Psoas muscle (tissue), 8 donors: ENCODE measurements at regions of chr10 and their contacts with region 1.

Region 1: DNA sequence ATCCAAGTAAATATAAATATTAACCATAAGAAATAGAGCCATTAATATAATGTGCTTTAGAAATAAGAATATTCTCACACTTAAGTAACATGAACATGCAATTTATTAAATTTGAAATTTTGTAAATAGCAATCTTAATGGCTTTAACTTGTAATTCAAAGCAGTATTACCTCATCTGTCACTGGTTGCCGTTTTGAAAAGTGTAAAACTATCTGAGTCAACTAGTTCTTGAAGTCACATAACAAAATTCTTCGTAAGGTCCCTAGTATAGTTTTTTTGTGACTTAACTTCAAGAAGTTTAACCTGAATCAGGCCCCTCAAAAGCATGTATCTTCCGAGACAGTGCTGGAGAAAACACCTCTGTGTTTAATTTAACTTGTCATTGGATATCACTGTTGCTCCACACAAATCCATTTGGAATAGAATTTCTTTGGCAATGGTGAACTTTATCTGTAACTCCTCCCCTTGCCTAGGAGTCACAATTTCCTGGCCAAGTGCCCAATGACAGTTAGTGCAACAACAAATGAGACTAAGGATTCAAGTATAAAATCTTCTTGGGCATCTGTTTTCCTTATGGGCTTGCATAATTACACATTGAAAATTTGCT is 47.1 kb downstream of the NT5C2 start:
- DNase-seq: peak; percentile 58 to 71
- ATAC-seq: peak; percentile 72 to 80 (median 76)
- H3K4me3 ChIP-seq: peak overlapping the region; percentile 61
- H3K27ac ChIP-seq: peak overlapping the region; percentile 86
- H3K4me1 ChIP-seq: peaks cover 76% of the 10 kb centered on the region
- H3K27me3 ChIP-seq: no peaks in the 10 kb centered on the region
- CTCF ChIP-seq: no peak

Region 2: DNA sequence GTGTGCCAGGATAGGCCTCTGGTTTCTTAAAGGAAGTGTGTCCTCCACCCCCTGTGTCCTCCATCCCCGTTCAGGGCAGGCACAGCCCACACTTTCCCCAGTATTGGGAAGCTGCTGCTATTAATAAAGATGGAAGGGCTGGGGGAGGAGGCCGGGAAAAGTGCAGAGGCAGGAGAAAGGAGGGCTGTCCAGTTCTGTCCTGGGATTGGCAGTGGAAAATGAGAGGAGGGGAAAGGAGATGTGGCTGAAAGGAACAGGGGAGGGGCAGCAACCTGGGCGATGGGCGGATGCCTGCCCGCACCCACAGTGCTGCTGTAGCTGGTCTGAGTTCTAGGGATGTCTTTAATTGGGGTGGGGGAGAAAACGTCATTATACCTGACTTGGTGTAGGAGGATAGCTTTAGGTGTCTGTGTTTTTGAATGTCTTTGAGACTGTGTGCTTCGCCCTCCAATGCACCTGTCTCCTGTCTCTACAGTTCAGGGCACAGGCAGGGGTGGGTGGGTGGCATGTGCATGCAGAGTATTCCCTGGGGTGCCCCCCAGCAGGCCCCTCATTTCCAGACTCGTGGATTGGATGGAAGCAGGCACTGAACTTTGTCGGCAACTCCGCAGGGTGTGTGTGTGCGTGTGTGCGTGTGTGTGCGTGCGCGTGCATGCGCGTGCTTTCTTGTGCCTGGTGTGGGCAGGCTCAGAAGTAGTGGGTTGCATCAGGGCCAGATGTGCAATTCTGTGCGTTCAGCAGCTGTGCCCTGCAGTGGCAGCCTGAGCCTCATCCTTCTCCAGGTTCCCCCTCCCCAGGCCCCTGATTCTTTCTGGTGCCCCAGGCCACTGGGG is 499.1 kb before region 1 on chr10:
- intact Hi-C with region 1: no loop called
- DNase-seq: peak; percentile 60 to 75
- ATAC-seq: no peak
- H3K4me3 ChIP-seq: peak overlapping the region; percentile 94
- H3K27ac ChIP-seq: peak overlapping the region; percentile 99
- H3K4me1 ChIP-seq: peaks cover 54% of the 10 kb centered on the region
- H3K27me3 ChIP-seq: no peaks in the 10 kb centered on the region
- CTCF ChIP-seq: no peak

Region 3: DNA sequence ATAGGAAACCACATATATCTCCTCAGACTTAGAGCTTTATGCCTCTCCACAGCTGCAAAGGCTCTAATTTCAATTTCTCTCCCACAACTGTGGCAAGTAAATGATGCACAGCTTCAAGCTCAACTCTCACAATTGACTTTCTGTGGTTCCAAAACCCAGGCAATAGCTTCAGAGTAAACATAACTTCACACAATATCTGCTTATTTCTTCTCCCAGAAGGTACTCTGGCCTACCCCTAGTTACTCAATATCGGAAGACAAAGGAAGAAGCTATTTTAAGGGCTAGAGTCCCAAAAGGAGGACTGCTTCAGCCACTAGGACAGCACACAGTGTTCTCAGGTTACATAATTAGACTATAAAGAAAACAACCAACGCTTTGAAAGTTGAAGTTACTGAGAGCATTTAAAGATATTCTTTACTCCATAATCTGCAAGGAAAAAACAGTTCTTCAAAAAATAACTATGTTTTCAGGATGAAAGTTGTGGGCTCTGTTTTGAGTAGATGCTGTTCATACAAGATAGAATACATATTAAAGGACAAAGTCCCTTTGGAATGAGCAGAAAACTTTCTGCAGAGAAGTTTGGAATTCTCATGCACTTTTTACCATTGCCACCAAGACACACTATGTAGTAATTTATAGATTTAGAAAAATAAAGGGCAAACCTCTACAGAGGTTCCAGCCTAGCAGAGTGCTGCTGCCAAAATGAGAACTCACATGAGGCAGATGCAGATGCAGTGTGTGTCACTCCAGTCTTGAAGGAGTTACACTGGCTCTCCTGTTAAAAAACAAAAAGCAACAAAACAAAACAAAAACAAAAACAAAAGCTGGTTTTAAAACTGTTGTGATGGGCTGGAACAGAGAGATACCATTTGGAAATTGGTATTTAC is 34.7 kb before region 1 on chr10:
- intact Hi-C with region 1: loop called (anchors 5 kb)
- DNase-seq: no peak
- ATAC-seq: peak; percentile 65 to 85 (median 75)
- H3K4me3 ChIP-seq: peak overlapping the region; percentile 26
- H3K27ac ChIP-seq: peak overlapping the region; percentile 70
- H3K4me1 ChIP-seq: peaks cover 92% of the 10 kb centered on the region
- H3K27me3 ChIP-seq: no peaks in the 10 kb centered on the region
- CTCF ChIP-seq: peak; percentile 3

Region 4: GRCh38 chr10:103181244-103181643 is 35.3 kb after region 1 on chr10:
- intact Hi-C with region 1: loop called in 1 of 2 experiments (anchors 2 kb)
- DNase-seq: no peak
- ATAC-seq: peak; percentile 35 to 56 (median 44)
- H3K4me3 ChIP-seq: no peak overlapping the region
- H3K27ac ChIP-seq: peak overlapping the region; percentile 67
- H3K4me1 ChIP-seq: peaks cover 65% of the 10 kb centered on the region
- H3K27me3 ChIP-seq: no peaks in the 10 kb centered on the region
- CTCF ChIP-seq: no peak

Region 5: GRCh38 chr10:103192451-103193106 is 46.6 kb after region 1 on chr10:
- intact Hi-C with region 1: loop called (anchors 5 kb)
- DNase-seq: peak; percentile 87 to 92
- ATAC-seq: peak; percentile 56 to 73 (median 69)
- H3K4me3 ChIP-seq: peak overlapping the region; percentile 89
- H3K27ac ChIP-seq: peak overlapping the region; percentile 99
- H3K4me1 ChIP-seq: peaks cover 39% of the 10 kb centered on the region
- H3K27me3 ChIP-seq: no peaks in the 10 kb centered on the region
- CTCF ChIP-seq: no peak

Region 6: GRCh38 chr10:103231047-103231551 is 85.1 kb after region 1 on chr10:
- intact Hi-C with region 1: loop called in 1 of 2 experiments (anchors 2 kb)
- DNase-seq: no peak
- ATAC-seq: peak in 3 of 4 donors; percentile 62 to 69 (median 62)
- H3K4me3 ChIP-seq: no peak overlapping the region
- H3K27ac ChIP-seq: peak overlapping the region; percentile 89
- H3K4me1 ChIP-seq: peaks cover 27% of the 10 kb centered on the region
- H3K27me3 ChIP-seq: no peaks in the 10 kb centered on the region
- CTCF ChIP-seq: no peak

Region 7: GRCh38 chr10:104049497-104050250 is 903.7 kb after region 1 on chr10:
- intact Hi-C with region 1: no loop called
- DNase-seq: no peak
- ATAC-seq: no peak
- H3K4me3 ChIP-seq: no peak overlapping the region
- H3K27ac ChIP-seq: no peak overlapping the region
- H3K4me1 ChIP-seq: no peaks in the 10 kb centered on the region
- H3K27me3 ChIP-seq: no peaks in the 10 kb centered on the region
- CTCF ChIP-seq: no peak